H1 (cell line): ENCODE measurements at regions of chr3 and their contacts with region 1.

Region 1: DNA sequence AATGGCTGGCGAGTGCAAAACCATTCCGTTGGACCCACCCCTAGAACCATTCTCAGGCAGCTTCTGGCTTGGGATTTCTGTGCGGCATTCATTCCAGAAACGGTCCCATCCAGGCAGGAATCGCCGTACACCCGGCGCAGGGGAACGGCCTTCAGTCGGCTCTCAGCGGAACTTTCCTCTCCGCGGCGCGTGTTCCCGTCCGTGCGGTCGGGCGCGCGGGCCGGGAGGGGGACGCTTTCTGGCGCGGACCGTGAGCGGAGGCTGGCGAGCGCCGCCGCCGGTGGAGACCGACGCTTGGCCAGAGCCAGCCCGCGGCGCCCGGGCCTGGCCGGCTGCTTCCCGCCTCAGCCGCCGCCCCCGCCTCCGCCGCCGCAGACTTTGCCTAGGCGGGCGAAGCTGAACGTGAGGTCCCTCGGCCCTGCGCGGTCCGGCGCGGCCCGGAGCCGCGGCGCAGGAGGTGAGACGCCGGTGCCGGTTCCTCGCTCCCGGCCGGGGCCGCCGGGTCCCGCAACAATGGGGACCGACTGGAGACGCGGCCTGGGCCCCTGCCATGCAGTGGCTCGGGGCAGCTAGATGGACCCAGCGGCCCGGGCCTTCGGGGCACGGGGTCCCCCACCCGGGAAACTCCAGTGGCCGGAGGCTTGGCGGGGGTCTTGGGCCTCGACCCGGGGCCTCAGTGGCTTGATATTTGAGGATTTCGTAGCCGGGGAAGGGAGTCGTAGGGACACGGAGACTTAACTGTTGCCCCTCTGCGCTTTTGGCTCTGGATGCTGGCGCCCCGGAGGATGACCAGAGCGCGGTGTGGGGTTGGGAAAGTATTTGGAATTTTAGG is at the start of gene RAD54L2:
- DNase-seq: peak; percentile 33 to 90
- H3K4me3 ChIP-seq: peak within 1 kb of the TSS; percentile 59 to 99 (median 92)
- H3K27ac ChIP-seq: peak within 1 kb of the TSS; percentile 73; the same call in 1 of the 2 replicates
- H3K4me1 ChIP-seq: peaks cover 0 to 7% (median 3%) of the 10 kb centered on the region in 4 experiments; a peak in 5 of 7 replicates
- H3K27me3 ChIP-seq: no peaks in the 10 kb centered on the region
- CTCF ChIP-seq: peak in 1 of 3 experiments; percentile 27; a peak in 2 of 4 replicates
- EP300 ChIP-seq: peak in 1 of 2 experiments; percentile 50; a peak in 1 of 3 replicates
- POLR2A ChIP-seq: peak; percentile 57 to 88
- RAD21 ChIP-seq: no peak
- total RNA-seq, gene RAD54L2: 32.6 and 35.2 TPM in 2 replicates

Region 2: DNA sequence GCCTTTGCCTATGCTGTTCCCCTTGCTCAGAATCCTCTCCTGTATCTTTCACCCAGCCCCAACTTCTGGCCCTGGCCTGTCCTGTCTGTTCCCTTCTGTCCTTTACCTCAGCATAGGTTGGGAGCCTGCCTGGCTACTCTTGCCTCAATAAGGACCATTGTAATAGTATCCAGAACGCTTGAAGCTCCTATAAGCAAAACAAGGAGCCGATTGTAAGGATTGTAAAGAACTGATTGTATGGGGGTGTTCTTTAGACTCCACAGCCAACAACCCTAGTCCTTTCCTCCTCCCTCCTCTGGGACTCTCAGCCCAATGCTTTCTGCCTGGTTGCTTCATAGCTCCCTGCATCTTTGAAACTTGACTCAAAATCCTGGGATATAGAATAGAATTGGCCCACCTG is 18.8 kb before region 1 on chr3:
- CTCF ChIA-PET with region 1: no interaction called
- POLR2A ChIA-PET with region 1: interaction called, 10 read pairs
- DNase-seq: no peak
- H3K4me3 ChIP-seq: no peak overlapping the region
- H3K27ac ChIP-seq: no peak overlapping the region
- H3K4me1 ChIP-seq: no peaks in the 10 kb centered on the region
- H3K27me3 ChIP-seq: no peaks in the 10 kb centered on the region
- CTCF ChIP-seq: no peak
- EP300 ChIP-seq: no peak
- POLR2A ChIP-seq: no peak
- RAD21 ChIP-seq: no peak

Region 3: DNA sequence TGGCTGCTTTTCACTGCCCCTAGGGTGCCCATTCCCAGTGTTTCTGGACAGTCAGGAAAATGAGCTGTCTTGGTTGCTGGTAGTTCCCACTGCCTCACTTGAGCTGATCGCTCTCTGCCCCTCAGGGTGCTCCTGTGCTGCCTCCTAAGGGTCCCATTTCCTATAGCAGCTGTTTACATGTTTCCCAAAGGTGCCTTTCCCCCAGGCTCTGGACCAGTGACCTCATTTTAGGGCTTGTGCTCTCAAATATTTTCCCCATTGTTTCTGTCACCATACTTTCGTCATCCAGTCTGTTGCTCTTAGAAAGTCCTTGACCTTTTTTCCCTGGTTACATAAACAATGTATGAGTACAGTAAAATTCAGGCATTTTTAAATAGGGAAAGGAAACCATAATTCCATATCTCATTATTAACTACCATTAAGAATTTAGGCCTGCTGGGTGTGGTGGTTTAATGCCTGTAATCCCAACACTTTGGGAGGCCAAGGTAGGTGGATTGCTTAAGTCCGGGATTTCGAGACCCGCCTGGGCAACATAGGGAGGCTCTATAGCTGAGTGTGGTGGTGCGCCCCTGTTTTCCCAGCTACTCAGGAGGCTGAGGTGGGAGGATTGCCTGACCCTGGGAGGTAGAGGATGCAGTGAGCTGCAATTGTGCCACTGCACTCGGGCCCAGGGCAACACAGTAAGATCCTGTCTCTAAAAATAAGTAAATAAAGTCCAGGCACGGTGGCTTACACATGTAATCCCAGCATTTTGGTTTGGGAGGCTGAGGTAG is 11.6 kb after region 1 on chr3:
- CTCF ChIA-PET with region 1: interaction called, 4 read pairs
- POLR2A ChIA-PET with region 1: interaction called, 11 read pairs
- DNase-seq: no peak
- H3K4me3 ChIP-seq: no peak overlapping the region
- H3K27ac ChIP-seq: no peak overlapping the region
- H3K4me1 ChIP-seq: no peaks in the 10 kb centered on the region
- H3K27me3 ChIP-seq: no peaks in the 10 kb centered on the region
- CTCF ChIP-seq: no peak
- EP300 ChIP-seq: no peak
- POLR2A ChIP-seq: no peak
- RAD21 ChIP-seq: no peak

Region 4: GRCh38 chr3:51581529-51581928 is 42.9 kb after region 1 on chr3:
- CTCF ChIA-PET with region 1: no interaction called
- POLR2A ChIA-PET with region 1: interaction called, 16 read pairs
- DNase-seq: no peak
- H3K4me3 ChIP-seq: no peak overlapping the region
- H3K27ac ChIP-seq: no peak overlapping the region
- H3K4me1 ChIP-seq: peaks cover 2 to 10% (median 5%) of the 10 kb centered on the region in 4 experiments; a peak in 4 of 7 replicates
- H3K27me3 ChIP-seq: no peaks in the 10 kb centered on the region
- CTCF ChIP-seq: no peak
- EP300 ChIP-seq: no peak
- POLR2A ChIP-seq: no peak
- RAD21 ChIP-seq: no peak

Region 5: DNA sequence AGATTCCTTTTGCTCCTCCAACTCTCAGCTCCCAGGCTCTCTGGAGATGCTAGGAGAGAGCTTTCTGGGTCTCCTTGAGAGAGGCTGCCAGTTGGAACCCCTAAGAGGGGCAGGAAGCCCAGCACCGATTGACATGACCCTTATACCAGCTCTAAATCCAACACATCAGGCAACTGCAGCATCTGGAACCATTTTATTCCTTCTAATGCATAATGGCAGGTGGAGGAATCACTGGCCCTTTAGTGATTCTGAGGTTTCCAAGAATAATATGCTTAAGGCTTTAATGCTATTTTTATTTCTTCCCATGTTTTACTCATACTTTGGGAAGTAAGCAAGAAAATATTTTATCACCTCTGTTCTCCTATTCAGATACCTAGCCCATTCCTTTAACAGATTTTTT is 72.0 kb after region 1 on chr3:
- CTCF ChIA-PET with region 1: no interaction called
- POLR2A ChIA-PET with region 1: no interaction called
- DNase-seq: no peak
- H3K4me3 ChIP-seq: no peak overlapping the region
- H3K27ac ChIP-seq: no peak overlapping the region
- H3K4me1 ChIP-seq: no peaks in the 10 kb centered on the region
- H3K27me3 ChIP-seq: no peaks in the 10 kb centered on the region
- CTCF ChIP-seq: no peak
- EP300 ChIP-seq: no peak
- POLR2A ChIP-seq: no peak
- RAD21 ChIP-seq: no peak

Region 6: GRCh38 chr3:51813539-51813938 is 274.9 kb after region 1 on chr3:
- CTCF ChIA-PET with region 1: no interaction called
- POLR2A ChIA-PET with region 1: no interaction called
- DNase-seq: no peak
- H3K4me3 ChIP-seq: no peak overlapping the region
- H3K27ac ChIP-seq: no peak overlapping the region
- H3K4me1 ChIP-seq: no peaks in the 10 kb centered on the region
- H3K27me3 ChIP-seq: no peaks in the 10 kb centered on the region
- CTCF ChIP-seq: no peak
- EP300 ChIP-seq: no peak
- POLR2A ChIP-seq: no peak
- RAD21 ChIP-seq: no peak